CD4-positive, alpha-beta T cell (primary cell): ENCODE measurements at regions of chr18 and their contacts with region 1.

Region 1: GRCh38 chr18:30072609-30073385 is 969.7 kb downstream of the DSC3 start:
- DNase-seq: no peak
- ATAC-seq: no peak
- H3K4me3 ChIP-seq: no peak overlapping the region
- H3K4me3 Mint-ChIP-seq: no peak overlapping the region
- H3K27ac ChIP-seq: no peak overlapping the region
- H3K27ac Mint-ChIP-seq: no peak overlapping the region
- H3K4me1 ChIP-seq: no peaks in the 10 kb centered on the region
- H3K4me1 Mint-ChIP-seq: no peaks in the 10 kb centered on the region
- H3K27me3 ChIP-seq: no peaks in the 10 kb centered on the region
- H3K27me3 Mint-ChIP-seq: no peaks in the 10 kb centered on the region
- CTCF ChIP-seq: no peak

Region 2: GRCh38 chr18:30121397-30121796 is 48.6 kb after region 1 on chr18:
- CTCF ChIA-PET with region 1: no interaction called
- POLR2A ChIA-PET with region 1: no interaction called
- intact Hi-C with region 1: loop called in 1 of 2 experiments (anchors 10 kb)
- DNase-seq: no peak
- ATAC-seq: no peak
- H3K4me3 ChIP-seq: no peak overlapping the region
- H3K4me3 Mint-ChIP-seq: no peak overlapping the region
- H3K27ac ChIP-seq: no peak overlapping the region
- H3K27ac Mint-ChIP-seq: no peak overlapping the region
- H3K4me1 ChIP-seq: no peaks in the 10 kb centered on the region
- H3K4me1 Mint-ChIP-seq: no peaks in the 10 kb centered on the region
- H3K27me3 ChIP-seq: no peaks in the 10 kb centered on the region
- H3K27me3 Mint-ChIP-seq: no peaks in the 10 kb centered on the region
- CTCF ChIP-seq: no peak